GM18951 (cell line): ENCODE measurements at regions of chr5 and their contacts with region 1.

Region 1: GRCh38 chr5:143837306-143837848 is 25.4 kb downstream of the HMHB1 start:
- POLR2A ChIP-seq: no peak

Region 2: DNA sequence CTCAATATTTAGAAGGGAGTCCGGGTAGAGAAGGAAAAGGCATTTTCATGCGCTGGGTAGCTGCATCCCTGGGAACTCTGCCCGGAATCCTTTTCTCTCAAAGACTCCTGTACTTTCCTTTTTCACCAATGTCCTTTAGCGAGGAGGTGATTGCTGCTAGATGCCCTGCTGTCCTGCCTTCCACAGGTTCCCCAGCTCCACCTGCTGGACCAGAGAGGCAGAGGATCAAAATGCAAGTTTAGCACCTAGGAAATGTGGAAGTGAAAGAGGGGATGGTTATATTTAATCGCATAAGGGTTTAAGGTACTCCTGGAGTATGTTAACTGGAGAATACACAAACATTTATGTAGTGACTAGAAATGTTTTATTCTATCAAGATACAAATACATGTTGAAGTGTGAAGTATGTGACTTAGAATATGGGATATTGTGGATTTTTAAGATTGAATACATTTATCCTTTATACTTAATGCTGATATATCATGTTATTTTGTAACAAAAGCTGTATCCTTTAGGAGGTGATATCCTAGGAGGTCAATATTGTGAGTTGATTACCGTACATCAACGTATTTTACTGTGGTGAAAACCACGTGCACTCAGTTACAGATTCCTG is 921.5 kb before region 1 on chr5:
- in situ Hi-C with region 1: loop called (anchors 10 kb)
- POLR2A ChIP-seq: no peak

Region 3: GRCh38 chr5:143896966-143897365 is 59.6 kb after region 1 on chr5:
- in situ Hi-C with region 1: no loop called
- POLR2A ChIP-seq: no peak